HCT116 (cell line): ENCODE measurements at regions of chr20 and their contacts with region 1.

Region 1: DNA sequence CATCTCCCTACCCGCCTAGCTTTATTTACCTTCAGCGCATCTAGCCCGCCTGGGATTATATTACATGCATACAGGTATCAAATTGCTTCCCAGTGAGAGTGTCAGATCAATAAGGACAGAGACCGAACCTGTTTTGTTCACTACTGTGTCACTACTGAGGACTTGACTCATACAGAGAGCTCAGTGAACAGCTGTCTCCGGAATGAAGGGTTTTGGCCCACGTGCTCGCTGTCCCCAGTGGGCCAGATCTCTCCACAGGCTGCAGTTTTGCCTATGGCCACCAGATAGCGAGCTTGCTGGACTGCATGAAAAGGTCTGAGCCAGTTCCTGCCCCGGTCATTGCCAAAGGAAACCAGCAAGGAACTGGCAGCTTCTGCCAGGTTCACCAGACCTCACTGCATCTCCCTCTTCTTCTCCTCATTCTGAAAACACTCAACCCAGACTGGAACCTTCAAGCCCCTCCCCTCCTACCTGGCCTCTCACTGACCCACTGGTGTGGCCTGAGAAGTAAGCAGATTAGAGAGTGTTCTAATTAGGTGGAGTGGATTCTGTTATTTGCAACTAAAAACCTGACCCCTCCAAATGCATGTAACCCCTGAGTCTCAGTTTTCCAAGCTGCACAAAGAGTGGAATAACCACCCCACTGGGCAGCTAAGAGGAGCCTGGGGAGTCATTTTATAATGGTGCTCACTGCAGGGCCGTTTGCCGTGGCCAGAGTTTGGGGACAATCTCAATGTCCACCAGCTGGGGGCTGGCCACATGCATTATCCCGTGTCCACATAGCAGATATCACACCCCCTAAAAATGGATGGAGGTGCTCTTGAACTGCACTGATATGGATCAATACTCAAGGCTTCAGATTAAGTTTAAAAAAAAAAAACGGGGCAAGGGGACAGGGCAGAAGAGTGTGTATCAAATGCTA is 150.7 kb downstream of the ZMYND8 start:
- DNase-seq: peak; percentile 77
- ATAC-seq: peak; percentile 61
- H3K4me3 ChIP-seq: peak overlapping the region in 1 of 2 experiments; percentile 15; a peak in 1 of 4 replicates
- H3K27ac ChIP-seq: peak overlapping the region; percentile 74
- H3K4me1 ChIP-seq: peaks cover 57 to 66% of the 10 kb centered on the region in 2 experiments
- H3K27me3 ChIP-seq: no peaks in the 10 kb centered on the region
- CTCF ChIP-seq: peak; percentile 56 to 85 (median 81); a peak in 5 of 6 replicates
- POLR2A ChIP-seq: no peak
- RAD21 ChIP-seq: peak; percentile 70

Region 2: DNA sequence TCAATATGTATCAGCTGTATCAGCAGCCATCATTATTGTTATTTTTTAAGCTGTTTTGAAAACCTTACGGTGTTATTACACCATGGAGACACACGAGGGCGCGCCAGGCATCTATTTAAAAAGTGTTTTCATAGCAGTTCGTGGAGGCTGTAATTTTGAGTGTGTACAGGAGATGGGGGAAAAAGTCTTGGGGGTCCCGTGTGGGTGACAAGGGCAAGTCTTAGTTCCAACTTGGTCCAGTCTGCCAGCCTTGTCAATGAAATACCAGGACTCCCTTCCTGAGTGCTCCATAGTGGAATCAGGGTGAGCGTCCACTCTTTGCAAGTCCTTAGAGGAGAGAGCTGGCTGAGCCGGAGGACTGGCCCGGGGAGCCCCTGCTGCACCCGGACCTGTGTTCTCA is 453.1 kb before region 1 on chr20:
- CTCF ChIA-PET with region 1: interaction called, 8 read pairs
- POLR2A ChIA-PET with region 1: no interaction called
- RAD21 ChIA-PET with region 1: no interaction called
- intact Hi-C with region 1: loop called (anchors 2 kb)
- DNase-seq: no peak
- ATAC-seq: peak; percentile 57
- H3K4me3 ChIP-seq: no peak overlapping the region
- H3K27ac ChIP-seq: no peak overlapping the region
- H3K4me1 ChIP-seq: peaks cover 0 to 13% of the 10 kb centered on the region in 2 experiments; a peak in 2 of 4 replicates
- H3K27me3 ChIP-seq: no peaks in the 10 kb centered on the region
- CTCF ChIP-seq: peak; percentile 51 to 77 (median 66); a peak in 5 of 6 replicates
- POLR2A ChIP-seq: no peak
- RAD21 ChIP-seq: peak; percentile 74

Region 3: GRCh38 chr20:47051936-47052526 is 153.8 kb before region 1 on chr20:
- CTCF ChIA-PET with region 1: no interaction called
- POLR2A ChIA-PET with region 1: no interaction called
- RAD21 ChIA-PET with region 1: no interaction called
- intact Hi-C with region 1: no loop called
- DNase-seq: no peak
- ATAC-seq: no peak
- H3K4me3 ChIP-seq: no peak overlapping the region
- H3K27ac ChIP-seq: no peak overlapping the region
- H3K4me1 ChIP-seq: no peaks in the 10 kb centered on the region
- H3K27me3 ChIP-seq: peaks cover 4% of the 10 kb centered on the region; the same call in 1 of the 2 replicates
- CTCF ChIP-seq: no peak
- POLR2A ChIP-seq: no peak
- RAD21 ChIP-seq: no peak

Region 4: DNA sequence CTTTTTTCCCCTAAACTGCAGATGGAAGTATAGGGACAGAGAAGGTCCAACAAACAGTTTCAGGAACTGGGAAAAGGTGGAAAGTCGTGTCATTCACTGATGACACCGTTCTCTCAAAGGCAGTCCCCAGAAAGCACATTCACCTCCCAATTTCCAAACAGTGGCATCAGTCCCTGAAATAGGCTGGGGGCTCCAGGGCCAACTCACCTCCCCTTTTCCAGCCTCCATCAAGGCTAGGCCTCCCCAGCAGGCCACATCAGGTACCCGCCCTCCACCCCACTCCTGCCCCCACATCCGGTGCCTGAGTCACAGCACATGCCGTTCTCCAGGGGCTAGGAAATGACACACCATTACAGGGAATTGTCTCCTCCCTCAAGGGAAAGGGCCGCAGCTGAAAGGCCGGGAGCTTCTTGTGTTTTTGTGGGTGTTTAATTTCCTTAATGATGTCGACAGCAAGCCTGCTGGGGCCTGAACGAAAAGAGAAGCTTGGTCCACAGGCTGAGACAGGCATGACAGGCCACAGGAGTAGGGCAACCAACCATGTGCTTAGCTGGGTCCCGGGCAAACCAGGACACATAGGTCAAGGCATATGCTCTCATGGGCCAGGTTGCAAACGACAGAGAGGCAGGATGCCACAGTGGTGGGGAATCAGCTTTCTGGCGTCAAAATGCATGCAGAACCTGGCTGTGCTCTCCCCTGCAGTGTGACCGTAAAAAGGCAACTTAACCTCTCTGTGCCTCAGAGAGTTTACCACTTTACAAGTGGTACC is 111.5 kb after region 1 on chr20:
- CTCF ChIA-PET with region 1: no interaction called
- POLR2A ChIA-PET with region 1: no interaction called
- RAD21 ChIA-PET with region 1: interaction called, 4 read pairs
- intact Hi-C with region 1: loop called (anchors 5 kb)
- DNase-seq: peak; percentile 87
- ATAC-seq: peak; percentile 65
- H3K4me3 ChIP-seq: peak overlapping the region; percentile 28 to 51
- H3K27ac ChIP-seq: peak overlapping the region; percentile 92
- H3K4me1 ChIP-seq: peaks cover 81 to 87% of the 10 kb centered on the region in 2 experiments
- H3K27me3 ChIP-seq: no peaks in the 10 kb centered on the region
- CTCF ChIP-seq: no peak
- POLR2A ChIP-seq: no peak
- RAD21 ChIP-seq: no peak

Region 5: GRCh38 chr20:47352332-47353238 is 146.7 kb after region 1 on chr20:
- CTCF ChIA-PET with region 1: no interaction called
- POLR2A ChIA-PET with region 1: no interaction called
- RAD21 ChIA-PET with region 1: no interaction called
- intact Hi-C with region 1: no loop called
- DNase-seq: no peak
- ATAC-seq: no peak
- H3K4me3 ChIP-seq: no peak overlapping the region
- H3K27ac ChIP-seq: no peak overlapping the region
- H3K4me1 ChIP-seq: peaks cover 41 to 56% of the 10 kb centered on the region in 2 experiments
- H3K27me3 ChIP-seq: no peaks in the 10 kb centered on the region
- CTCF ChIP-seq: no peak
- POLR2A ChIP-seq: no peak
- RAD21 ChIP-seq: no peak

Region 6: GRCh38 chr20:47620808-47621805 is 415.3 kb after region 1 on chr20:
- CTCF ChIA-PET with region 1: interaction called, 12 read pairs
- POLR2A ChIA-PET with region 1: no interaction called
- RAD21 ChIA-PET with region 1: no interaction called
- intact Hi-C with region 1: no loop called
- DNase-seq: peak; percentile 51
- ATAC-seq: no peak
- H3K4me3 ChIP-seq: no peak overlapping the region
- H3K27ac ChIP-seq: no peak overlapping the region
- H3K4me1 ChIP-seq: peaks cover 0 to 6% of the 10 kb centered on the region in 2 experiments; a peak in 2 of 4 replicates
- H3K27me3 ChIP-seq: no peaks in the 10 kb centered on the region
- CTCF ChIP-seq: peak; percentile 66 to 79 (median 73); a peak in 5 of 6 replicates
- POLR2A ChIP-seq: no peak
- RAD21 ChIP-seq: peak; percentile 83